Heart left ventricle (tissue), 16 donors: ENCODE measurements at regions of chr1 and their contacts with region 1.

Region 1: GRCh38 chr1:175887981-175888433 is 144.6 kb upstream of the TNR start:
- DNase-seq: peak; percentile 45 to 68 (median 56)
- ATAC-seq: peak; percentile 82 to 97 (median 92)
- H3K4me3 ChIP-seq: no peak overlapping the region
- H3K27ac ChIP-seq: no peak overlapping the region
- H3K4me1 ChIP-seq: peaks cover 0 to 10% (median 0%) of the 10 kb centered on the region in 12 donors
- H3K27me3 ChIP-seq: no peaks in the 10 kb centered on the region
- CTCF ChIP-seq: peak; percentile 64 to 88 (median 78)
- POLR2A ChIP-seq: no peak

Region 2: DNA sequence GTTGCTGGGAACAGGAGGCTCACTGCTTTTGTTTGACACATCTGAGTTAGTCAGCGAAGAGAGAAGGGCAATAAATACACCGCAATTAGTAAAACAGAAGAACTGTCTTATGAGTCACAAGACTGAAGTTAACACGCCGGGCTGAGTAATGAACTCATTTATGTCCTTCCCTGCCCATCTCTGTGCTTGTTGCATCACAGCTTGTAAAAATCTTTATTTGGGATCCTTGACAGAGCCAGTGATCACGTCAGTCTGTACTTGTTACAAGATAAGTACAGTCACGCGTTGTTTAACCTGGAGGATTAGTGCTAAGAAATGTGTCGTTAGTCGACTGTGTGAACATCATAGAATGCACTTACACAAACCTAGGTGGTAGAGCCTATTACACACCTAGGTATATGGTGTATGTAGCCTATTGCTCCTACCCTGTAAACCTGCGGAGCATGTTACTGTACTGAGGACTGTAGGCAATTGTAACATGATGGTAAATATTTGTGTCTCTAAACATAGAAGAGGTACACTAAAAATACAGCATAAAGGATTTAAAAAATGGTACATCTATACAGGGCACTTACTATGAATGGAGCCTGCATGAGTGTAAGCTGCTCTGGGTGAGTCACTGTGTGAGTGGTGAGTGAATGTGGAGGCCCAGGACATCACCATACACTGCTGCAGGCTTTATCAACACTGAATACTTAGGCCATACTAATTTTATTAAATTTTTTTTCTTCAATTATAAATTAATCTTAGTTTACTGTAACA is 416.8 kb before region 1 on chr1:
- intact Hi-C with region 1: loop called in 1 of 10 experiments (anchors 10 kb)
- DNase-seq: no peak
- ATAC-seq: peak in 2 of 4 donors; percentile 22 to 51
- H3K4me3 ChIP-seq: no peak overlapping the region
- H3K27ac ChIP-seq: no peak overlapping the region
- H3K4me1 ChIP-seq: no peaks in the 10 kb centered on the region
- H3K27me3 ChIP-seq: peaks cover 0 to 8% (median 0%) of the 10 kb centered on the region in 9 donors
- CTCF ChIP-seq: no peak
- POLR2A ChIP-seq: no peak

Region 3: DNA sequence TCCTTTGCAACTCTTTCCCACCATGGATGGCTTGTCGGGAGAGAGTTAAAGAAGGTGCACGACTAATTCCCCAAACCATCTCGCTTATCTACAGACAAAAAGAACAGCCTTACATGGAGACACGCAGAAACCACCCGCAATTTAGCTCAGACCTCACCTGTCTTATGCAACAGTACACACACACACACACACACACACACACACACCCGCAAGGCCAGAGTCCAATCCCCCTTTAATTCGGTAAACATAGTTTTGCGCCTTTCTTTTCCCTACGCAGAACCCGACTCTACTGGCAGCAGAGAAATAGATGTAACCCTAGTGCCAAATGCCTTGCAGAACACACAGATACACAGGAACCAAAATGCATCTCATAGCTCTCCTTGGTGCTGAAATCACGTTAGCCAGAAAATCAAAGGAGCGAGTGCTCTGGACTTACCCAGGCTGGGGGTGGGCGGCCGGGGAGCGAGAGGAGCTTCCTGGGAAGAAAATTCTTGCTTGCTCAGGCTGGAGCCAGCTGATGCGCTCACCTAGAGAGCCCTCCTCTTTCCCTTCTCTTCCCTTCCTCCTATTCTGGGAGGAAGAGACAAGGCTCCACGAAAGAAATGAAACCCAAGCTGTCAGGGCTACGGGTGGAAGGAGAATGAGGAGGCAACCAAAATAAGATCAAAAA is 145.1 kb before region 1 on chr1:
- intact Hi-C with region 1: loop called in 1 of 10 experiments (anchors 10 kb)
- DNase-seq: no peak
- ATAC-seq: peak; percentile 37 to 79 (median 51)
- H3K4me3 ChIP-seq: no peak overlapping the region
- H3K27ac ChIP-seq: no peak overlapping the region
- H3K4me1 ChIP-seq: peaks cover 0 to 5% (median 0%) of the 10 kb centered on the region in 12 donors
- H3K27me3 ChIP-seq: peaks cover 0 to 22% (median 4%) of the 10 kb centered on the region in 9 donors
- CTCF ChIP-seq: no peak
- POLR2A ChIP-seq: no peak